ENCODE measurements at regions of chr3 and their contacts with region 1.

Region 1: GRCh38 chr3:195512798-195513345 is 30.3 kb downstream of the PPP1R2 start:
- DNase-seq: no peak
- ATAC-seq: no peak
- H3K4me3 ChIP-seq: no peak overlapping the region
- H3K27ac ChIP-seq: no peak overlapping the region
- H3K4me1 ChIP-seq: no peaks in the 10 kb centered on the region
- H3K27me3 ChIP-seq: no peaks in the 10 kb centered on the region
- CTCF ChIP-seq: no peak
- POLR2A ChIP-seq: no peak
- RAD21 ChIP-seq: no peak

Region 2: GRCh38 chr3:195271116-195271858 is 241.6 kb before region 1 on chr3 and contains the start of gene XXYLT1:
- CTCF ChIA-PET with region 1: interaction called, 16 read pairs
- POLR2A ChIA-PET with region 1: no interaction called
- dilution Hi-C with region 1: no loop called
- in situ Hi-C with region 1: no loop called
- intact Hi-C with region 1: loop called (anchors 2 kb)
- DNase-seq: peak; percentile 80
- ATAC-seq: peak; percentile 89
- H3K4me3 ChIP-seq: peak within 1 kb of the TSS; percentile 93
- H3K27ac ChIP-seq: peak within 1 kb of the TSS; percentile 86
- H3K4me1 ChIP-seq: peaks cover 5% of the 10 kb centered on the region
- H3K27me3 ChIP-seq: no peaks in the 10 kb centered on the region
- CTCF ChIP-seq: peak; percentile 98
- POLR2A ChIP-seq: 0 out of 2 replicates have a peak, but pooled peaks have one; percentile 22
- RAD21 ChIP-seq: peak; percentile 89
- total RNA-seq, gene XXYLT1: 13.1 and 14.7 TPM in 2 replicates

Region 3: GRCh38 chr3:195467641-195468390 is 45.1 kb before region 1 on chr3:
- CTCF ChIA-PET with region 1: no interaction called
- POLR2A ChIA-PET with region 1: no interaction called
- dilution Hi-C with region 1: no loop called
- in situ Hi-C with region 1: loop called (anchors 10 kb)
- intact Hi-C with region 1: no loop called
- DNase-seq: peak; percentile 59
- ATAC-seq: peak; percentile 53; the same call in 1 of the 2 replicates
- H3K4me3 ChIP-seq: no peak overlapping the region
- H3K27ac ChIP-seq: no peak overlapping the region
- H3K4me1 ChIP-seq: no peaks in the 10 kb centered on the region
- H3K27me3 ChIP-seq: peaks cover 5% of the 10 kb centered on the region; the same call in 1 of the 2 replicates
- CTCF ChIP-seq: no peak
- POLR2A ChIP-seq: no peak
- RAD21 ChIP-seq: no peak

Region 4: GRCh38 chr3:195542698-195543499 is 30.0 kb after region 1 on chr3 and contains the start of gene PPP1R2:
- CTCF ChIA-PET with region 1: no interaction called
- POLR2A ChIA-PET with region 1: interaction called, 13 read pairs
- dilution Hi-C with region 1: no loop called
- in situ Hi-C with region 1: no loop called
- intact Hi-C with region 1: no loop called
- DNase-seq: peak; percentile 86
- ATAC-seq: peak; percentile 96
- H3K4me3 ChIP-seq: peak within 1 kb of the TSS; percentile 83
- H3K27ac ChIP-seq: peak within 1 kb of the TSS; percentile 70
- H3K4me1 ChIP-seq: peaks cover 4% of the 10 kb centered on the region
- H3K27me3 ChIP-seq: peaks cover 4% of the 10 kb centered on the region; the same call in 1 of the 2 replicates
- CTCF ChIP-seq: no peak
- POLR2A ChIP-seq: peak; percentile 96
- RAD21 ChIP-seq: no peak
- total RNA-seq, gene PPP1R2: 36.0 and 55.3 TPM in 2 replicates